Left colon (tissue), 2 donors: ENCODE measurements at regions of chr3 and their contacts with region 1.

Region 1: GRCh38 chr3:134473868-134474546 is 11.8 kb downstream of the ANAPC13 start:
- DNase-seq: peak; percentile 41 to 88
- ATAC-seq: peak; percentile 75

Region 2: GRCh38 chr3:134212906-134213665 is 260.9 kb before region 1 on chr3:
- intact Hi-C with region 1: loop called in 1 of 2 experiments (anchors 10 kb)
- DNase-seq: peak; percentile 53 to 89
- ATAC-seq: peak; percentile 92

Region 3: GRCh38 chr3:134308350-134308891 is 165.6 kb before region 1 on chr3:
- intact Hi-C with region 1: loop called (anchors 5 kb)
- DNase-seq: peak; percentile 76 to 87
- ATAC-seq: peak; percentile 61

Region 4: DNA sequence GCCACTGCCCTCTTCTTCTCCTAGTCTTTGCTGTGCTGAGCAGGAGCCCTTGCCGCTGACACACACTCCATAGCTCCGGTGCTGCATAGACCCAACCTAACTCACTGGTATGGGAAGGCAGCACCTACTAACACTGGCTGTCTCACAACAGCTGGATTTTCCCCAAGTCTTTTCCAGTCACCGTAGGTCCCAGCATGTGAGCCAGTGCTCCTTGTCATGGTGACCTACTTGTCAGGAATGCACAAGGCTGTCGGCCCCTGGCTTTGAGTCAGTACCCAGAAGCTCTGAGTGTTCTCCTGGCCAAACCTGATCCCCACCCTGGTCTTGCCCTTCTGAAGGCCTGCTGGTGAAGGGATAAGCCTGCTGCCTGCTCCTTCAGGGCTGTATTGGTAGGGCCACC is 125.5 kb before region 1 on chr3:
- intact Hi-C with region 1: no loop called
- DNase-seq: no peak
- ATAC-seq: no peak

Region 5: GRCh38 chr3:134373994-134374790 is 99.8 kb before region 1 on chr3 and contains the start of gene AMOTL2:
- intact Hi-C with region 1: loop called in 1 of 2 experiments (anchors 10 kb)
- DNase-seq: peak; percentile 81 to 86
- ATAC-seq: peak; percentile 74
- total RNA-seq, gene AMOTL2: 17.6 to 18.7 TPM